MCF 10A (cell line): ENCODE measurements at regions of chr12 and their contacts with region 1.

Region 1: DNA sequence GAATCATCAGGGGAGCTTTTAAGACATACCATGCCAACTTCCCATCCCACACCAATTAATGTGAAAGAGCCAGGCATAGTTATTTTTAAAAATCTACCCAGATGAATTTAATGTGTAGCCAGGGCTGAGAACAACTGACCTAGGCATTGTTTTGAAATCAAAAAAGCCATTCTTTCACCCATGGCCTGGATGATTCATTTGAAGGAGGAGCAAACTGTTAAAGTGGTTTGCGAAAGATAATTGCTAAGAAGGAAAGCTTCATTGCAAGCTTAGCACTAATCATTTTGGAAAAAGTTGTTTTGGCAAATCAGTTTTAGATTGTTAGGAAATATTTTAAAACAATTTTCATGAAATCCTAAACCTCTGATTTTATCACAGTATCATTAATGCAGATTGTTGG is 2.1 kb upstream of the GTSF1 start:
- DNase-seq: peak; percentile 69
- H3K4me3 Mint-ChIP-seq: no peak overlapping the region
- H3K27ac Mint-ChIP-seq: no peak overlapping the region
- H3K4me1 Mint-ChIP-seq: no peaks in the 10 kb centered on the region
- H3K27me3 Mint-ChIP-seq: no peaks in the 10 kb centered on the region
- CTCF ChIP-seq: no peak

Region 2: DNA sequence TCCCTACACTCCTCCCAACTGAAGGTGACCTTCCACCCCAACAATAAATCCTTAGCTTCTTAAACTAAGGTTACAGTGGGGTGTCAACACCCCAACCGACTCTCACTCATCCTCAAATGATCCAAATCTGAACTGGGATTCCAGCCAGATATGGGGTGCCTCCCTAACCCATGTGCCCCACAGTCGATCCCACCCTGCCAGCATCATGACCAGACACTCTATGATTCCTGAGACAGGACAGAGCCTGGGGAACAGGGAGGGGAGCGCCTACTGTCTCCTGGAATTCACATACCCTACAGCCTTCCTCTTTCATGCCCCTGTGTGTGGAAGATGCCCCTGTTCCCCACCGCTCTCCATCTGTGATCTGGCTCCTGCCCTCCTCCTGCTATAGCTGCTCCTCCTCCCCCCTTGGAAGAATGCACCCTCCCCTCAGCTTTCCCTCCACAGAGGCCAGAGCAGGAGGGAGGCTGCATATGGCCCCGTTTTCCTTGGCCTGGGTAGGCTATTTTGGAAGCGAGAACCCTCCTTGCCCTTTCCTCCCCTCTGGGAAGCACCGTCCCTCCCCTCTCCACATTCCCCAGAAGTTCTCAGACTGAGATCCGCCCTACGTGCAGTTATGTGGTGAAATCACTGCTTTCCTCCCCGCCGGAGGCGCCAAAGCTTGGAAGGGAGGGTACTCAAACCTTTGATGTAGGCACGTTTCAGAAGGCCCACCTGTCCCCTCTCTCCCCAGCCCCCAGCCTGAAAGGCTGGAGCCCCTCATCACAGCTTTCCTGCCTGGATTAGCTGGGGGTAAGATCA is 334.7 kb before region 1 on chr12:
- CTCF ChIA-PET with region 1: no interaction called
- POLR2A ChIA-PET with region 1: no interaction called
- intact Hi-C with region 1: no loop called
- DNase-seq: no peak
- H3K4me3 Mint-ChIP-seq: no peak overlapping the region
- H3K27ac Mint-ChIP-seq: no peak overlapping the region
- H3K4me1 Mint-ChIP-seq: no peaks in the 10 kb centered on the region
- H3K27me3 Mint-ChIP-seq: no peaks in the 10 kb centered on the region
- CTCF ChIP-seq: no peak

Region 3: GRCh38 chr12:54463034-54463433 is 12.5 kb before region 1 on chr12:
- CTCF ChIA-PET with region 1: interaction called, 6 read pairs
- POLR2A ChIA-PET with region 1: interaction called, 12 read pairs
- intact Hi-C with region 1: no loop called
- DNase-seq: peak; percentile 92
- H3K4me3 Mint-ChIP-seq: no peak overlapping the region
- H3K27ac Mint-ChIP-seq: no peak overlapping the region
- H3K4me1 Mint-ChIP-seq: peaks cover 6% of the 10 kb centered on the region
- H3K27me3 Mint-ChIP-seq: no peaks in the 10 kb centered on the region
- CTCF ChIP-seq: no peak

Region 4: DNA sequence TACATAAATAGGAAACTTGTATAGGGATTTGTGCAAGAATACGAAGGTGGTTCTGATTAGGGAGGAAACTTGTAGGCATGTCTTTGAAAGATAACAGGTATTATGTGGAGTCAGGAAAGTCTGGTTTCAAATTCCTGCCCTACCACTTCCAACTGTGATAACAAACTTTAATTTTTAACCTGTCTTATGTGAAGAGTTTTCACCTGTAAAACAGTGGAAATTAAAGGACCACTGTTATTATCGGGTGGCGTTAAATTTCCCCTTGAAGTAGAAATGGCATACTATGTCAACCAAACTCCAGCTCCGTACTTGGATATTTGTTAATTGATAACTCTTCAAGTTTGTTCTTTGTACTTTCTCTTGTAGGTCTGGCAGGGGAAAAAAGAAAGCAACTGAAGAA is 844.7 kb after region 1 on chr12:
- CTCF ChIA-PET with region 1: no interaction called
- POLR2A ChIA-PET with region 1: no interaction called
- intact Hi-C with region 1: no loop called
- DNase-seq: no peak
- H3K4me3 Mint-ChIP-seq: no peak overlapping the region
- H3K27ac Mint-ChIP-seq: no peak overlapping the region
- H3K4me1 Mint-ChIP-seq: no peaks in the 10 kb centered on the region
- H3K27me3 Mint-ChIP-seq: peaks cover 56% of the 10 kb centered on the region
- CTCF ChIP-seq: no peak